PC-3 (cell line): ENCODE measurements at regions of chr12 and their contacts with region 1.

Region 1: DNA sequence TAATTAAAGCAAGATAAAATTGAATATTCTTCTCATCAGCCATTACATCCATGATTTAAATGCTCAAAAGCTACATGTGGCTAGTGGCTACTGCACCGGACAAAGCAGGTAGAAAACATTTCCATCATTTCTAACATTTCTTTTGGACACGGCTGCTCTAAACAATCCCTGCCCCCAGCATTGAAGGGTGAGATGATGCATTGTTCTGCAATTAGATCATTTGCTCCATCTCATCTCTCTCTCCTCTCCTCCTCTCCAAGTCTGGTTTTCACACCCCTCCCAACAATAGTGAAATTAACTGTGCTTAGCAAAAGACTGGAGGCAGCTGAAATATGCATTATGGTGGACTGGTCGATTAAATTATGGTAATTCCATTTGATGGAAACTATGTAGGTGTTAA is 288.5 kb downstream of the KSR2 start:
- DNase-seq: peak; percentile 43
- ATAC-seq: peak; percentile 12
- H3K4me3 ChIP-seq: no peak overlapping the region; the same call in 1 of the 2 replicates
- H3K27ac ChIP-seq: peak overlapping the region; percentile 67
- H3K4me1 ChIP-seq: peaks cover 33% of the 10 kb centered on the region
- H3K27me3 ChIP-seq: no peaks in the 10 kb centered on the region
- CTCF ChIP-seq: no peak

Region 2: GRCh38 chr12:117472983-117473382 is 207.3 kb before region 1 on chr12:
- CTCF ChIA-PET with region 1: no interaction called
- POLR2A ChIA-PET with region 1: no interaction called
- intact Hi-C with region 1: no loop called
- DNase-seq: peak; percentile 33
- ATAC-seq: peak; percentile 58
- H3K4me3 ChIP-seq: no peak overlapping the region
- H3K27ac ChIP-seq: no peak overlapping the region
- H3K4me1 ChIP-seq: no peaks in the 10 kb centered on the region
- H3K27me3 ChIP-seq: no peaks in the 10 kb centered on the region
- CTCF ChIP-seq: peak; percentile 86

Region 3: DNA sequence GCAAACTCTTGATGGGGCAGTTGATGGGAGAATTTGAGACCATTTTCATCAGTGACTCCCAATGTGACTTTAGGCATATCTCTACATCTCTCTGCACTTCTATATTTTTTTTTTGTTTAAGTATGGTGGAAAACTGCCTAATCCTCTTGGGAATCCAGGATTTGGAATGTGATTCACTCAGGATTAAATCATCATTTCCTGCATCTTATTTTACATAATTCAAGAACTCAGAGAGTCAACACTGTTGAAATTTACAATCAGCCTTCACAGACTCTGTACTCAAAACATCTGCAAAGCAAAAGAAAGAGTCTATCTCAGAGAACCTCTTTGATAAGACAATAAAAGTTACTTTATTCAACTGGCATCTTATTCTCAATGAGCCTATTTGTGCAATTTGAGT is 58.2 kb before region 1 on chr12:
- CTCF ChIA-PET with region 1: no interaction called
- POLR2A ChIA-PET with region 1: no interaction called
- intact Hi-C with region 1: loop called (anchors 5 kb)
- DNase-seq: peak; percentile 71
- ATAC-seq: peak; percentile 72
- H3K4me3 ChIP-seq: no peak overlapping the region
- H3K27ac ChIP-seq: peak overlapping the region; percentile 34
- H3K4me1 ChIP-seq: peaks cover 15% of the 10 kb centered on the region
- H3K27me3 ChIP-seq: no peaks in the 10 kb centered on the region
- CTCF ChIP-seq: no peak

Region 4: DNA sequence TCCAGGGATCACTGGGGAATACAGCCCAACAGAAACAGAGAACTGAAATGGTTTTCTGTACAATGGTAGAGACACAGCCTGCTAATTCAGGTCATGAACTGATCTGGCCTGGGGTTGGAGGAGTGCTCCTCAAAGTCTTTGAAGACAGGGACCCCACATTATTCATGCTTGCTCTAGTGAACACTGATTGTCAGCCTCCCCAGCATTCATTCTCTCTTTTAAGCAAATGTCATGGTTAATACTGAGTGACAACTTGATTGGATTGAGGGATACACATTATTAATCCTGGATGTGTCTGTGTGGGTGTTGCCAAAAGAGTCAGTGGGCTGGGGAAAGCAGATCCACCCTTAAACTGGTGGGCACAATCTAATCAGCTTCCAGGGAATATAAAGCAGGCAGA is 30.5 kb before region 1 on chr12:
- CTCF ChIA-PET with region 1: no interaction called
- POLR2A ChIA-PET with region 1: no interaction called
- intact Hi-C with region 1: no loop called
- DNase-seq: no peak
- ATAC-seq: no peak
- H3K4me3 ChIP-seq: no peak overlapping the region
- H3K27ac ChIP-seq: no peak overlapping the region
- H3K4me1 ChIP-seq: no peaks in the 10 kb centered on the region
- H3K27me3 ChIP-seq: no peaks in the 10 kb centered on the region
- CTCF ChIP-seq: no peak